GM12878 (cell line): ENCODE measurements at regions of chr18 and their contacts with region 1.

Region 1: GRCh38 chr18:10560450-10561045 is 34.7 kb downstream of the NAPG start:
- DNase-seq: peak; percentile 48
- ATAC-seq: peak; percentile 90
- H3K4me3 ChIP-seq: peak overlapping the region; percentile 21; the same call in 1 of the 2 replicates
- H3K27ac ChIP-seq: peak overlapping the region; percentile 66
- H3K4me1 ChIP-seq: peaks cover 5% of the 10 kb centered on the region
- H3K27me3 ChIP-seq: no peaks in the 10 kb centered on the region
- CTCF ChIP-seq: peak; percentile 69 to 80 (median 78)
- EP300 ChIP-seq: no peak
- POLR2A ChIP-seq: no peak
- RAD21 ChIP-seq: peak; percentile 89

Region 2: GRCh38 chr18:9861157-9861556 is 699.4 kb before region 1 on chr18:
- CTCF ChIA-PET with region 1: no interaction called
- POLR2A ChIA-PET with region 1: no interaction called
- RAD21 ChIA-PET with region 1: no interaction called
- SMC1A ChIA-PET with region 1: no interaction called
- in situ Hi-C with region 1: no loop called
- intact Hi-C with region 1: no loop called
- DNase-seq: peak; percentile 49
- ATAC-seq: peak; percentile 93
- H3K4me3 ChIP-seq: no peak overlapping the region
- H3K27ac ChIP-seq: no peak overlapping the region
- H3K4me1 ChIP-seq: peaks cover 7% of the 10 kb centered on the region; the same call in 1 of the 2 replicates
- H3K27me3 ChIP-seq: no peaks in the 10 kb centered on the region
- CTCF ChIP-seq: no peak
- EP300 ChIP-seq: no peak
- POLR2A ChIP-seq: no peak
- RAD21 ChIP-seq: no peak

Region 3: GRCh38 chr18:10499230-10499629 is 61.3 kb before region 1 on chr18:
- CTCF ChIA-PET with region 1: no interaction called
- POLR2A ChIA-PET with region 1: no interaction called
- RAD21 ChIA-PET with region 1: no interaction called
- SMC1A ChIA-PET with region 1: no interaction called
- in situ Hi-C with region 1: no loop called
- intact Hi-C with region 1: no loop called
- DNase-seq: no peak
- ATAC-seq: peak; percentile 79
- H3K4me3 ChIP-seq: no peak overlapping the region
- H3K27ac ChIP-seq: no peak overlapping the region
- H3K4me1 ChIP-seq: no peaks in the 10 kb centered on the region
- H3K27me3 ChIP-seq: no peaks in the 10 kb centered on the region; a peak in 2 of 4 replicates
- CTCF ChIP-seq: no peak
- EP300 ChIP-seq: peak in 1 of 2 experiments; percentile 60; a peak in 1 of 4 replicates
- POLR2A ChIP-seq: no peak
- RAD21 ChIP-seq: no peak

Region 4: GRCh38 chr18:10546557-10547300 is 13.8 kb before region 1 on chr18:
- CTCF ChIA-PET with region 1: interaction called, 29 read pairs
- POLR2A ChIA-PET with region 1: no interaction called
- RAD21 ChIA-PET with region 1: no interaction called
- SMC1A ChIA-PET with region 1: interaction called, 9 read pairs
- in situ Hi-C with region 1: no loop called
- intact Hi-C with region 1: no loop called
- DNase-seq: no peak
- ATAC-seq: no peak
- H3K4me3 ChIP-seq: no peak overlapping the region
- H3K27ac ChIP-seq: no peak overlapping the region
- H3K4me1 ChIP-seq: no peaks in the 10 kb centered on the region
- H3K27me3 ChIP-seq: no peaks in the 10 kb centered on the region
- CTCF ChIP-seq: no peak
- EP300 ChIP-seq: no peak
- POLR2A ChIP-seq: no peak
- RAD21 ChIP-seq: no peak

Region 5: DNA sequence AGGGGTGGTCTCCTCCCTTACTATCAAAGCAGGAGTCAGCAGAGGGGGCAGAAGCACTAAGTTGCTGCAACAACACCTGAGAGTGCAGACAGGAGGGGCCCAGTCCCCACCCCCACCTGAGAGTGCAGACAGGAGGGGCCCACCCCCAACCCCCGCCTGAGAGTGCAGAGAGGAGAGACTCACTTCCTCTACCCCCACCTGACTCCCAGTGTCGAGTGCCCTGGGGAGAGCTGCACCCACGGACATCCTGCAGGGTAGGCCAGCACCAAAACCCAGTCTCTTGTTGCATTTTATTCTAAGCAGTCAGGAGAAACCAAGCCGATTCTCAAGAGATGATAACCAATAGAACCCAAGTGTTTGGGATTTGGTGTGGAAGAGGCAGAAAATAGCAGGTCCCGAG is 43.6 kb after region 1 on chr18:
- CTCF ChIA-PET with region 1: no interaction called
- POLR2A ChIA-PET with region 1: no interaction called
- RAD21 ChIA-PET with region 1: no interaction called
- SMC1A ChIA-PET with region 1: no interaction called
- in situ Hi-C with region 1: loop called (anchors 5 kb)
- intact Hi-C with region 1: no loop called
- DNase-seq: no peak
- ATAC-seq: peak; percentile 45; the same call in 1 of the 3 replicates
- H3K4me3 ChIP-seq: no peak overlapping the region
- H3K27ac ChIP-seq: no peak overlapping the region; the same call in 1 of the 2 replicates
- H3K4me1 ChIP-seq: no peaks in the 10 kb centered on the region; the same call in 1 of the 2 replicates
- H3K27me3 ChIP-seq: no peaks in the 10 kb centered on the region
- CTCF ChIP-seq: no peak
- EP300 ChIP-seq: no peak
- POLR2A ChIP-seq: no peak
- RAD21 ChIP-seq: no peak

Region 6: DNA sequence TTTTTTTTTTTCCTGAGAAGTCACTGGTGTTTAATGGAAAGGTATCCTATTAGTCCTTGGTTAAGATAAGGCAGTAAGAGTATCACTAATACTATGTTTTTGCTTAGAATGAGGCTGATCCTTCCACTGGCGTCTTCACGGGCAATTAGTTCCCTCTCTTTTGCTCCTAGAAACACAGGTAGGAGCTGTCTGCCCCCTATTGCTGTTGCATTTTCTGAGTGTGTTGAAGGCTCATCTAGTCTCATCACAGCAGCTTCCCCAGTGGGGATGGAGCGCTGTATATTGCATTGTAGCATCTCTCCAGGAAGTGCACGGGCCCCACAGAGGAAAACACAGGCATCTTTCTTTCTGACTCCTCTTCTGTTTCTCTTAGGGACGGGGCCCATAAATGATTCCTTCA is 110.3 kb after region 1 on chr18:
- CTCF ChIA-PET with region 1: interaction called, 21 read pairs
- POLR2A ChIA-PET with region 1: no interaction called
- RAD21 ChIA-PET with region 1: interaction called, 8 read pairs
- SMC1A ChIA-PET with region 1: interaction called, 6 read pairs
- in situ Hi-C with region 1: no loop called
- intact Hi-C with region 1: no loop called
- DNase-seq: no peak
- ATAC-seq: no peak
- H3K4me3 ChIP-seq: no peak overlapping the region
- H3K27ac ChIP-seq: no peak overlapping the region
- H3K4me1 ChIP-seq: no peaks in the 10 kb centered on the region
- H3K27me3 ChIP-seq: no peaks in the 10 kb centered on the region
- CTCF ChIP-seq: peak in 1 of 3 experiments; percentile 22; a peak in 1 of 6 replicates
- EP300 ChIP-seq: no peak
- POLR2A ChIP-seq: no peak
- RAD21 ChIP-seq: peak; percentile 38

Region 7: DNA sequence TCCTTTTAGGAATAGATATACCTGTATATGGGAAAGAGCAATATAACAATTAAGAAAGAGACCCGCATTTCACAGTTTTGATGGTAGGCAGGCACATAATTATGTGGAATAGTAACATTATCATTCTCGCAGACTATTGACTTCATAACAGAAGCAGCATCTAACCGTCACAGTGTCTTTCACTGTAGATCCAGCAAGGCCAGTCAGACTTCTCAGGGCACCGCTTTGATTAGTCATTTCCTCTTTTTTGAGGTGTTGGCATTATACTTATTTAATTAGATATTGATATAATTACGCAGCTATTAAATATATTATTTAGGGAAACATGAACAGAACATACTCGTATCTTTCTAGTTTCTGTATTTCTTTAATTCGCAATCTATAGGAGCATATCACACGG is 141.7 kb after region 1 on chr18:
- CTCF ChIA-PET with region 1: interaction called, 13 read pairs
- POLR2A ChIA-PET with region 1: no interaction called
- RAD21 ChIA-PET with region 1: interaction called, 5 read pairs
- SMC1A ChIA-PET with region 1: interaction called, 3 read pairs
- in situ Hi-C with region 1: no loop called
- intact Hi-C with region 1: no loop called
- DNase-seq: no peak
- ATAC-seq: no peak
- H3K4me3 ChIP-seq: no peak overlapping the region
- H3K27ac ChIP-seq: no peak overlapping the region
- H3K4me1 ChIP-seq: no peaks in the 10 kb centered on the region
- H3K27me3 ChIP-seq: no peaks in the 10 kb centered on the region
- CTCF ChIP-seq: no peak
- EP300 ChIP-seq: no peak
- POLR2A ChIP-seq: no peak
- RAD21 ChIP-seq: no peak

Region 8: GRCh38 chr18:10787293-10787901 is 226.8 kb after region 1 on chr18:
- CTCF ChIA-PET with region 1: interaction called, 17 read pairs
- POLR2A ChIA-PET with region 1: no interaction called
- RAD21 ChIA-PET with region 1: interaction called, 5 read pairs
- SMC1A ChIA-PET with region 1: interaction called, 5 read pairs
- in situ Hi-C with region 1: no loop called
- intact Hi-C with region 1: loop called (anchors 5 kb)
- DNase-seq: peak; percentile 77
- ATAC-seq: peak; percentile 96
- H3K4me3 ChIP-seq: no peak overlapping the region
- H3K27ac ChIP-seq: no peak overlapping the region
- H3K4me1 ChIP-seq: no peaks in the 10 kb centered on the region; the same call in 1 of the 2 replicates
- H3K27me3 ChIP-seq: no peaks in the 10 kb centered on the region
- CTCF ChIP-seq: peak; percentile 79 to 97 (median 82)
- EP300 ChIP-seq: peak; percentile 48 to 55; a peak in 2 of 4 replicates
- POLR2A ChIP-seq: no peak
- RAD21 ChIP-seq: peak; percentile 88

Region 9: GRCh38 chr18:10858477-10858876 is 297.9 kb after region 1 on chr18:
- CTCF ChIA-PET with region 1: no interaction called
- POLR2A ChIA-PET with region 1: no interaction called
- RAD21 ChIA-PET with region 1: no interaction called
- SMC1A ChIA-PET with region 1: no interaction called
- in situ Hi-C with region 1: no loop called
- intact Hi-C with region 1: no loop called
- DNase-seq: no peak
- ATAC-seq: no peak
- H3K4me3 ChIP-seq: no peak overlapping the region
- H3K27ac ChIP-seq: no peak overlapping the region
- H3K4me1 ChIP-seq: no peaks in the 10 kb centered on the region
- H3K27me3 ChIP-seq: no peaks in the 10 kb centered on the region
- CTCF ChIP-seq: no peak
- EP300 ChIP-seq: no peak
- POLR2A ChIP-seq: no peak
- RAD21 ChIP-seq: no peak

Region 10: GRCh38 chr18:11387880-11388279 is 827.3 kb after region 1 on chr18:
- CTCF ChIA-PET with region 1: no interaction called
- POLR2A ChIA-PET with region 1: no interaction called
- RAD21 ChIA-PET with region 1: no interaction called
- SMC1A ChIA-PET with region 1: no interaction called
- in situ Hi-C with region 1: no loop called
- intact Hi-C with region 1: no loop called
- DNase-seq: no peak
- ATAC-seq: peak; percentile 72
- H3K4me3 ChIP-seq: no peak overlapping the region
- H3K27ac ChIP-seq: no peak overlapping the region
- H3K4me1 ChIP-seq: no peaks in the 10 kb centered on the region
- H3K27me3 ChIP-seq: peaks cover 0 to 5% of the 10 kb centered on the region in 2 experiments; a peak in 2 of 4 replicates
- CTCF ChIP-seq: peak; percentile 42 to 47 (median 45); a peak in 3 of 6 replicates
- EP300 ChIP-seq: no peak
- POLR2A ChIP-seq: no peak
- RAD21 ChIP-seq: peak; percentile 49

Region 11: DNA sequence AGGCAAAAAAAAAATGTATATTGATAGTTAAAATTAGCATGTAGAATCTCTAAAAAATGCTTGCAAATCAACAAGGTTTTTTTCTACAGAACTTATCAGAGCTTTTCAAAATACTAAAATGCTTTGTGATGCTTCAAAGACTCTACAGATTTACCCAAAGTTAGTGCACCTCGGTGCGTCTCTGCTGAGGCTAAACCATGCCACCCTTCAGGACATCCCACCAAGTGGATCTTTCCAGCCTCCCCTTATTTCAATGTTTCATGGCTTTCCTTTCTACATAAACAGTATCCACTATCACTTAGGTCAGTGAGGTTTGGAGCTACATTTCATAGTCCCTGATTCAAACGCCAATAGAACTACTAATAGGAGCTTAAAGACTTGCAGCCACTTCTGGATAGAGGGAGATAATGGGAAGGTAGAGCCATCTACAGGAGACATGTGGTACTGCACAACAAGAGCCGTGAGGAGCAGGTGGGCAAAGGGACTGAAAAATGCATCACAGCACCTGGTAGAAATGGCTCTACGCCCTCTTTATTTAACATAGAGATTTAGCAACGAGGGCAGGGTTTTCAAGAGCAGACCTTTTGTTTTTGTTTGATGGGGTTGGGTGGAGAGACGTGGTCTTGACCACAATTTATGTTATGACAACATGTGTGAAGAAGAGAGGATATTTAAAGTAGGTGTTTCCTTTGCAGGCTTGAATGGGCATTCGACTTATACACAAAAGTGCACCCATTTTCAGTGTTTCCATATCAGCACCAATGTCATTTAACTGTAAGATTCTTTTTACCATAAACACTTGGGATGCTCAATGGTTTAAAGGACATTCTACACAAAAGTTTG is 992.8 kb after region 1 on chr18:
- CTCF ChIA-PET with region 1: interaction called, 6 read pairs
- POLR2A ChIA-PET with region 1: no interaction called
- RAD21 ChIA-PET with region 1: interaction called, 4 read pairs
- SMC1A ChIA-PET with region 1: interaction called, 3 read pairs
- in situ Hi-C with region 1: no loop called
- intact Hi-C with region 1: loop called (anchors 5 kb)
- DNase-seq: no peak
- ATAC-seq: peak; percentile 90
- H3K4me3 ChIP-seq: no peak overlapping the region
- H3K27ac ChIP-seq: no peak overlapping the region
- H3K4me1 ChIP-seq: no peaks in the 10 kb centered on the region
- H3K27me3 ChIP-seq: peaks cover 2 to 3% of the 10 kb centered on the region in 2 experiments; a peak in 3 of 4 replicates
- CTCF ChIP-seq: peak; percentile 83 to 91 (median 91)
- EP300 ChIP-seq: no peak
- POLR2A ChIP-seq: no peak
- RAD21 ChIP-seq: peak; percentile 87